ENCODE measurements at regions of chr5 and their contacts with region 1.

Region 1: GRCh38 chr5:98773464-98774191 is at the start of gene RGMB:
- DNase-seq: peak; percentile 94
- H3K4me3 Mint-ChIP-seq: peak within 1 kb of the TSS; percentile 90
- H3K27ac Mint-ChIP-seq: peak within 1 kb of the TSS; percentile 55
- H3K4me1 Mint-ChIP-seq: peaks cover 32% of the 10 kb centered on the region
- H3K27me3 Mint-ChIP-seq: peaks cover 68% of the 10 kb centered on the region
- total RNA-seq, gene RGMB: 0.35 and 0.90 TPM in 2 replicates

Region 2: DNA sequence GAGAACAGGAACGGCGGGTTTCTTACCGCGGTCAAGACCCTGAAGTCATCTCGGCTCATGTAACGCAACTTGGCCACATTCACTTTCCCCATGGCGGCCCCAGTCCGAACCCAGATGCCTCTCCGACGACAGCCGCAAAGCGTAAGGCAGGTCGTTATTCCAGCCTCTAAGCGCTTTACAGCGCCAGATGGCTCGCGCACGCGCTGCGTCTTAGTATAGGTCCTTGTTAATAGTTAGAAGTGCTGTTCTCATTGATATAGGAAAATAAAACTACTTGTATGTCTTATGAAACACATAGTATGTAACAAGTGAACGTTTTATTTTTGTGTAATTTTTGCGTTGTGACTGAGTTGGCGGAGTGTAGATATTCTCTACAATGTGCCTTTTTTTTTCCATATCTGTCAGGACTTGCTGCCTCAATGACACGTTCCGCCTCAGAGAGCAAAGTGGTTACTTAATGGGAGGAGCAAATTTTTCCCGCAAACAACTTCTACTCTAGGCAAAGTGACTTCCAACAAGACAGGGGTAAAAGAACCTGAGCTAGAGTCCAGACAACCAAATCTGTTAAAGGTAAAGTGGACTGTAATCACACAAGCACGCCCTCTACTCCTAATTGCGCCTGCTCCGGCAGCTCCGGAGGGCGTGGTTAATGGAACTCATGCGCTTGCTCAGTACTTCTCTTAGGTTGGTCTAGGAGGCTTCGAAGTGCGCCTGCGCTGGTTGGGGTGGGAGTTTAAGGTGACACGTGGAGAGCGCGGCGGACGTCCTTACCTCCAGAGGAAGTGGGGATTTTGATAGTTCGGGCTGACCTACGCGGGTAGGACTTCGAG is 1590.3 kb before region 1 on chr5 and contains the start of gene RIOK2:
- intact Hi-C with region 1: loop called (anchors 2 kb)
- DNase-seq: peak; percentile 97
- H3K4me3 Mint-ChIP-seq: peak within 1 kb of the TSS; percentile 89
- H3K27ac Mint-ChIP-seq: peak within 1 kb of the TSS; percentile 100
- H3K4me1 Mint-ChIP-seq: peaks cover 24% of the 10 kb centered on the region
- H3K27me3 Mint-ChIP-seq: peaks cover 4% of the 10 kb centered on the region
- total RNA-seq, gene RIOK2: 40.8 and 42.0 TPM in 2 replicates

Region 3: GRCh38 chr5:98309785-98310598 is 463.6 kb before region 1 on chr5:
- intact Hi-C with region 1: loop called (anchors 2 kb)
- DNase-seq: peak; percentile 73
- H3K4me3 Mint-ChIP-seq: peak overlapping the region; percentile 0
- H3K27ac Mint-ChIP-seq: peak overlapping the region; percentile 27
- H3K4me1 Mint-ChIP-seq: peaks cover 12% of the 10 kb centered on the region
- H3K27me3 Mint-ChIP-seq: peaks cover 1% of the 10 kb centered on the region

Region 4: GRCh38 chr5:98604721-98605425 is 168.8 kb before region 1 on chr5:
- intact Hi-C with region 1: no loop called
- DNase-seq: no peak
- H3K4me3 Mint-ChIP-seq: no peak overlapping the region
- H3K27ac Mint-ChIP-seq: no peak overlapping the region
- H3K4me1 Mint-ChIP-seq: no peaks in the 10 kb centered on the region
- H3K27me3 Mint-ChIP-seq: no peaks in the 10 kb centered on the region

Region 5: GRCh38 chr5:98928873-98929696 is 155.5 kb after region 1 on chr5 and contains the start of gene CHD1:
- intact Hi-C with region 1: loop called (anchors 1 kb)
- DNase-seq: peak; percentile 98
- H3K4me3 Mint-ChIP-seq: peak within 1 kb of the TSS; percentile 95
- H3K27ac Mint-ChIP-seq: peak within 1 kb of the TSS; percentile 99
- H3K4me1 Mint-ChIP-seq: peaks cover 40% of the 10 kb centered on the region
- H3K27me3 Mint-ChIP-seq: peaks cover 5% of the 10 kb centered on the region
- total RNA-seq, gene CHD1: 74.2 and 80.6 TPM in 2 replicates

Region 6: DNA sequence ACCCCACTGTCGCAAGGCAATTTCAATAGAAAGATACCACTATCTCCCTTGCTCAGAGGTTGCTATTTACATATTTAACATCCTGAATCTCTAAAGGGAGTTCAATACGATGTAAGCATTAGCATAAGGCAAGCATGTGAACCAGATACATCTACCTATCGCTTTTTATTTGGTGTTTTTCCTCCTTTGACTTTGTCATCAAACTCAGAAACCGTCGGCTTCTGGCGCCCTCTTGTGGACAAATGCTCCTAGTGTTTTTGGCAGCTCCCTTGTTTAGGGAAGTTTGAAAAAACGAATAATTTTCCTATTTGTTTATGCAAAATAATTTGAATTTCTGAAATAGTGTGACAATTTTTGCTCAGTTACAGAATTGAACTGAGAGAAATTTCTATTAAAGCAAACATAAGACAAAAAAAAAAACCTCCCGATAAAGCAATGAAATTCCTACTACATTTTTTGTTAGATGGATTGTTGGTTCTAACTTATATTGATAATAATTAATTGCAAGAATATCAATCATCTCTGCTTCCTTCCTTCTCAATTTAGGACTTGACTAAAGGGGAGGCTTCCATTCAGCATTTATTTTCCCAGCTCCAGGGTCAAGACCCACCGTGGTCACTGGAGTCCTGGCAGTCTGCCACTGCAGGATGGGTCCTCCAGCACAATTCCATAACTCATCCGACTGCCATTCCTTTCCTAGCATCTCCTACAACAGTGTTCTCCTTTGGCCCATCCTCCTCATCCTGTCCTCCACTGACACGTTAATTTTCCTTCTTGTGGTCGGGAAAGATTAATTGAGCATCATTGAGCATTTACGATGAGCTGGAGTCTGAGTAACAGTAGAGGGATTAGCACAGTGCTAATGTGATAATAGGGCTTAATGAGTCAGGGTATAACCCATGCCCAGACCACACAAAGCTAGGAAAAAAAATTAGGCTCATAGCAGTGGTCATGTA is 287.0 kb after region 1 on chr5:
- intact Hi-C with region 1: loop called (anchors 2 kb)
- DNase-seq: peak; percentile 95
- H3K4me3 Mint-ChIP-seq: no peak overlapping the region
- H3K27ac Mint-ChIP-seq: no peak overlapping the region
- H3K4me1 Mint-ChIP-seq: peaks cover 1% of the 10 kb centered on the region
- H3K27me3 Mint-ChIP-seq: peaks cover 17% of the 10 kb centered on the region

Measured in activated CD4-positive, alpha-beta T cell treated with anti-CD3 and anti-CD28 coated beads, Interleukin-2, amount 10 ng/mL, durations not matched to agents 24 days and 14 days (primary cell).